Dorsolateral prefrontal cortex (tissue), 120 donors: ENCODE measurements at regions of chr1 and their contacts with region 1.

Region 1: DNA sequence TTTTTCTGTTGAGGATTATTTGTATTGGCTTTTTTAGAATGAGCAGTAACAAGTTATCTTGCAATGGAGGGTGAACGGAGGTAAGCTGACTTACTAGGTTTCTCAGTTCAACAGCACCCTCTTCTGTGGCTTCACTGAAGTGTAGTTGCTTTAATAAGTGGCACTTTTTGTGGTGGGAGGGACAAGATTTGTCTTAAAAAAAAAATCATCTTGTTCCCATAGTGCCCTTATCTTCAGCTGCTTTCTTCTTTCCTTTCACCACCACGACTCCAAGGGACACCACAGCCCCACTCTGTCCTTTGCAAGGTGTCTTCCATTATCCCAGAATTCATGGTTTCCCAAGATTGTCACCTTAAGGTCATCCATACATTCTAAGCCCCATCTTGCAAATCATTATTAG is 92.9 kb downstream of the PIGK start:
- DNase-seq: peak in 1 of 10 donors; percentile 7
- H3K4me3 ChIP-seq: no peak overlapping the region
- H3K27ac ChIP-seq: no peak overlapping the region
- H3K27me3 ChIP-seq: no peaks in the 10 kb centered on the region
- CTCF ChIP-seq: peak; percentile 11 to 75 (median 62)

Region 2: GRCh38 chr1:75991497-75992114 is 1134.7 kb before region 1 on chr1:
- intact Hi-C with region 1: loop called in 1 of 2 experiments (anchors 5 kb)
- DNase-seq: peak; percentile 84 to 95 (median 92)
- H3K4me3 ChIP-seq: no peak overlapping the region
- H3K27ac ChIP-seq: no peak overlapping the region
- H3K27me3 ChIP-seq: peaks cover 0 to 10% (median 0%) of the 10 kb centered on the region in 45 donors
- CTCF ChIP-seq: peak; percentile 73 to 97 (median 88)